Aorta (tissue), 5 donors: ENCODE measurements at regions of chr1 and their contacts with region 1.

Region 1: GRCh38 chr1:229339520-229339919 is 3.3 kb downstream of the CCSAP start:
- DNase-seq: peak in 1 of 2 donors; percentile 55
- ATAC-seq: no peak
- H3K4me3 ChIP-seq: no peak overlapping the region
- H3K27ac ChIP-seq: no peak overlapping the region
- H3K4me1 ChIP-seq: no peaks in the 10 kb centered on the region
- H3K27me3 ChIP-seq: no peaks in the 10 kb centered on the region

Region 2: GRCh38 chr1:229270547-229271447 is 68.7 kb before region 1 on chr1 and contains the start of gene RAB4A:
- intact Hi-C with region 1: loop called in 1 of 2 experiments (anchors 5 kb)
- DNase-seq: peak; percentile 92 to 96
- ATAC-seq: peak; percentile 95
- H3K4me3 ChIP-seq: peak within 1 kb of the TSS; percentile 98 to 100
- H3K27ac ChIP-seq: peak within 1 kb of the TSS; percentile 75 to 92
- H3K4me1 ChIP-seq: peaks cover 0 to 2% of the 10 kb centered on the region in 2 donors
- H3K27me3 ChIP-seq: no peaks in the 10 kb centered on the region
- total RNA-seq, gene RAB4A: 58.2 to 60.5 TPM